CD8-positive, alpha-beta T cell (primary cell): ENCODE measurements at regions of chr3 and their contacts with region 1.

Region 1: GRCh38 chr3:151146071-151146730 is 56.8 kb downstream of the GPR171 start:
- DNase-seq: peak in 8 of 9 experiments; percentile 38 to 76 (median 58)
- ATAC-seq: peak; percentile 98
- H3K4me3 ChIP-seq: no peak overlapping the region
- H3K4me3 Mint-ChIP-seq: no peak overlapping the region
- H3K27ac ChIP-seq: no peak overlapping the region
- H3K27ac Mint-ChIP-seq: no peak overlapping the region
- H3K4me1 ChIP-seq: peaks cover 3% of the 10 kb centered on the region
- H3K4me1 Mint-ChIP-seq: no peaks in the 10 kb centered on the region
- H3K27me3 ChIP-seq: no peaks in the 10 kb centered on the region
- H3K27me3 Mint-ChIP-seq: peaks cover 8% of the 10 kb centered on the region
- CTCF ChIP-seq: peak; percentile 78

Region 2: GRCh38 chr3:150528354-150528797 is 617.8 kb before region 1 on chr3:
- CTCF ChIA-PET with region 1: no interaction called
- POLR2A ChIA-PET with region 1: no interaction called
- intact Hi-C with region 1: loop called (anchors 1 to 5 kb)
- DNase-seq: peak in 2 of 9 experiments; percentile 45 to 50
- ATAC-seq: peak; percentile 54
- H3K4me3 ChIP-seq: no peak overlapping the region
- H3K4me3 Mint-ChIP-seq: no peak overlapping the region
- H3K27ac ChIP-seq: no peak overlapping the region
- H3K27ac Mint-ChIP-seq: no peak overlapping the region
- H3K4me1 ChIP-seq: no peaks in the 10 kb centered on the region
- H3K4me1 Mint-ChIP-seq: no peaks in the 10 kb centered on the region
- H3K27me3 ChIP-seq: no peaks in the 10 kb centered on the region
- H3K27me3 Mint-ChIP-seq: no peaks in the 10 kb centered on the region
- CTCF ChIP-seq: peak; percentile 67

Region 3: GRCh38 chr3:150787741-150788370 is 358.3 kb before region 1 on chr3:
- CTCF ChIA-PET with region 1: interaction called, 35 read pairs
- POLR2A ChIA-PET with region 1: no interaction called
- intact Hi-C with region 1: loop called (anchors 1 to 2 kb)
- DNase-seq: peak; percentile 52 to 83 (median 80)
- ATAC-seq: peak; percentile 86
- H3K4me3 ChIP-seq: no peak overlapping the region
- H3K4me3 Mint-ChIP-seq: no peak overlapping the region
- H3K27ac ChIP-seq: no peak overlapping the region
- H3K27ac Mint-ChIP-seq: no peak overlapping the region
- H3K4me1 ChIP-seq: no peaks in the 10 kb centered on the region
- H3K4me1 Mint-ChIP-seq: peaks cover 3% of the 10 kb centered on the region
- H3K27me3 ChIP-seq: no peaks in the 10 kb centered on the region
- H3K27me3 Mint-ChIP-seq: peaks cover 3% of the 10 kb centered on the region
- CTCF ChIP-seq: peak; percentile 98

Region 4: GRCh38 chr3:151008699-151009098 is 137.5 kb before region 1 on chr3:
- CTCF ChIA-PET with region 1: interaction called, 5 read pairs
- POLR2A ChIA-PET with region 1: no interaction called
- intact Hi-C with region 1: loop called (anchors 1 to 5 kb)
- DNase-seq: no peak
- ATAC-seq: no peak
- H3K4me3 ChIP-seq: no peak overlapping the region
- H3K4me3 Mint-ChIP-seq: no peak overlapping the region
- H3K27ac ChIP-seq: no peak overlapping the region
- H3K27ac Mint-ChIP-seq: no peak overlapping the region
- H3K4me1 ChIP-seq: no peaks in the 10 kb centered on the region
- H3K4me1 Mint-ChIP-seq: no peaks in the 10 kb centered on the region
- H3K27me3 ChIP-seq: no peaks in the 10 kb centered on the region
- H3K27me3 Mint-ChIP-seq: peaks cover 5% of the 10 kb centered on the region
- CTCF ChIP-seq: no peak

Region 5: DNA sequence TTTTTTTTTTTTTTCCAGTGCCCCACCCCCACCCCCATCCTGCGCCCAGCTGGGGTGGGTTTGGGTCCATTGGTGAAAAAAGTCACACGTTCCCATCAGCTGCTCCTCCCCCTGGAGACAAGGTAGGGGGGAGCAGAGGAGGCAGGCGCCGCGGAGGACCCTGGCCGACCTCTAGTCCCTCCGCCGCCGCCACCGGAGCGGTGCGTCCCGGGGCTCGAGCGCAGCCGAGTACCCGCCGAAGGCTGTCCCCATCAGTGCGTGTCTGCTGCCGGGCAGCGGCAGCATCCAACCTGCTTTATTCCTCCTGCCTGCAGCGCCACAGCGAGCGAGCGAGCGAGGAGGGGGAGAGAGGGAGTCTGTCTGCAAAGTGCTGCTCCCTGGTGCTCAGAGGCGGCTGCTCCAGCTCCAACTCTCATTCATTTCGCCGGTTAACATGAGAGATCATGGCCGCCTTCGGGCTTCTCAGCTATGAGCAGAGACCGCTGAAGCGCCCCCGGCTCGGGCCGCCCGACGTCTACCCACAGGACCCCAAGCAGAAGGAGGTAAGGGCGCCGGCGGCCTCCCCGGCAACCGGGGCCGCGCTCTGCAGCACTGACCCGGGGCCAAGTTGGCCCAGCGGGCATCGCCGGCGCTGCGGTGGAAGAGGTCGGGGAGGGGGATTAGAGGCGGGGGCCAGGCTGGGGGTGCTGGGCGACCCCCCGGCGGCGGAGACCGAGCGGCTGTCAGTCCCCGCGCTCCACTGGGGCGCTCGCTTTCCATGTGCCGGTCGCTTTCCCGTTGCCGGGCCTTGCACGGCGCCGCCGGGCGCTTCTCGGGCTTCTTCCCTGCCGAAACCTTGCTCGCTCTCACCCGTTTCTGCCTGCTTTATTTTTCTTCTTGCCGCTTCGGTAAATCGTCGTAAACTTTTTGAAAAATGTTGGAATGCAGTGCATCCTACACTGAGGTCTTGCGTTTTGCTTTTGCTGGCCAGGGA is 59.4 kb before region 1 on chr3:
- CTCF ChIA-PET with region 1: interaction called, 13 read pairs
- POLR2A ChIA-PET with region 1: no interaction called
- intact Hi-C with region 1: loop called in 1 of 2 experiments (anchors 1 kb)
- DNase-seq: peak; percentile 35 to 80 (median 67)
- ATAC-seq: peak; percentile 90
- H3K4me3 ChIP-seq: peak overlapping the region; percentile 39 to 73
- H3K4me3 Mint-ChIP-seq: peak overlapping the region; percentile 90
- H3K27ac ChIP-seq: no peak overlapping the region
- H3K27ac Mint-ChIP-seq: no peak overlapping the region
- H3K4me1 ChIP-seq: peaks cover 9% of the 10 kb centered on the region
- H3K4me1 Mint-ChIP-seq: peaks cover 15% of the 10 kb centered on the region
- H3K27me3 ChIP-seq: peaks cover 0 to 6% of the 10 kb centered on the region in 2 experiments
- H3K27me3 Mint-ChIP-seq: peaks cover 39% of the 10 kb centered on the region
- CTCF ChIP-seq: no peak

Region 6: GRCh38 chr3:151156618-151157216 is 10.5 kb after region 1 on chr3:
- CTCF ChIA-PET with region 1: interaction called, 27 read pairs
- POLR2A ChIA-PET with region 1: interaction called, 7 read pairs
- intact Hi-C with region 1: no loop called
- DNase-seq: peak in 3 of 9 experiments; percentile 34 to 73 (median 65)
- ATAC-seq: peak; percentile 69
- H3K4me3 ChIP-seq: no peak overlapping the region
- H3K4me3 Mint-ChIP-seq: no peak overlapping the region
- H3K27ac ChIP-seq: no peak overlapping the region
- H3K27ac Mint-ChIP-seq: no peak overlapping the region
- H3K4me1 ChIP-seq: no peaks in the 10 kb centered on the region
- H3K4me1 Mint-ChIP-seq: no peaks in the 10 kb centered on the region
- H3K27me3 ChIP-seq: no peaks in the 10 kb centered on the region
- H3K27me3 Mint-ChIP-seq: peaks cover 5% of the 10 kb centered on the region
- CTCF ChIP-seq: peak; percentile 78

Region 7: DNA sequence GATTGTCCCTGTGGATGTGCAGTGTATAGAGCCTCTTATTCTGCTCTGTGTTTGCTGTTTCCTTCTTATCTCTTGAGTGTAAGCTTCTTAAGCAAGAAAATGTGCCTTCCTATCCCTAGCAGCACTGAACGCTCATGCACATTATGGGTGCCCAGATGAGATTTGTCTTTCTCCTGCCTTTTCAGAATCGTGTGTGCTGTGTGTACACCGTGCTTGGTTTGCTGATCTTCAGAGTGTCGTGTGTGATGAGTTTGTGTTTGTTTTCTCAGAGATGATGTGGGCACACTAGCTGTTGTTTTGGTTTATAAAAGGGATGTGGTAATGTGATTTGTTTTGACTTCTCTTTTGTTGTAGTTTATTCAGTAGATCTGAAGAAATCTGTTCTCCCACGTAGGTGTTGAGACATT is 37.1 kb after region 1 on chr3:
- CTCF ChIA-PET with region 1: no interaction called
- POLR2A ChIA-PET with region 1: no interaction called
- intact Hi-C with region 1: no loop called
- DNase-seq: peak in 2 of 9 experiments; percentile 25 to 47
- ATAC-seq: peak; percentile 76
- H3K4me3 ChIP-seq: peak overlapping the region in 1 of 2 experiments; percentile 0
- H3K4me3 Mint-ChIP-seq: peak overlapping the region; percentile 68
- H3K27ac ChIP-seq: peak overlapping the region in 1 of 2 experiments; percentile 2
- H3K27ac Mint-ChIP-seq: peak overlapping the region; percentile 77
- H3K4me1 ChIP-seq: peaks cover 14% of the 10 kb centered on the region
- H3K4me1 Mint-ChIP-seq: peaks cover 39% of the 10 kb centered on the region
- H3K27me3 ChIP-seq: no peaks in the 10 kb centered on the region
- H3K27me3 Mint-ChIP-seq: no peaks in the 10 kb centered on the region
- CTCF ChIP-seq: no peak

Region 8: GRCh38 chr3:151213881-151214280 is 67.7 kb after region 1 on chr3:
- CTCF ChIA-PET with region 1: no interaction called
- POLR2A ChIA-PET with region 1: no interaction called
- intact Hi-C with region 1: no loop called
- DNase-seq: no peak
- ATAC-seq: no peak
- H3K4me3 ChIP-seq: no peak overlapping the region
- H3K4me3 Mint-ChIP-seq: no peak overlapping the region
- H3K27ac ChIP-seq: no peak overlapping the region
- H3K27ac Mint-ChIP-seq: no peak overlapping the region
- H3K4me1 ChIP-seq: peaks cover 6% of the 10 kb centered on the region
- H3K4me1 Mint-ChIP-seq: peaks cover 24% of the 10 kb centered on the region
- H3K27me3 ChIP-seq: no peaks in the 10 kb centered on the region
- H3K27me3 Mint-ChIP-seq: no peaks in the 10 kb centered on the region
- CTCF ChIP-seq: no peak